ENCODE measurements at regions of chr1 and their contacts with region 1.

Region 1: GRCh38 chr1:25997828-25998761 is at the start of gene PAFAH2:
- DNase-seq: peak; percentile 85
- ATAC-seq: peak; percentile 98
- H3K4me3 Mint-ChIP-seq: peak within 1 kb of the TSS; percentile 95
- H3K27ac Mint-ChIP-seq: peak within 1 kb of the TSS; percentile 95
- H3K4me1 Mint-ChIP-seq: peaks cover 18% of the 10 kb centered on the region
- H3K27me3 Mint-ChIP-seq: no peaks in the 10 kb centered on the region
- CTCF ChIP-seq: peak; percentile 89
- total RNA-seq, gene PAFAH2: 5.4 and 9.2 TPM in 2 replicates

Region 2: GRCh38 chr1:25616095-25616986 is 381.8 kb before region 1 on chr1 and contains the start of gene MAN1C1:
- CTCF ChIA-PET with region 1: no interaction called
- POLR2A ChIA-PET with region 1: no interaction called
- intact Hi-C with region 1: loop called (anchors 5 kb)
- DNase-seq: peak; percentile 88
- ATAC-seq: peak; percentile 93
- H3K4me3 Mint-ChIP-seq: peak within 1 kb of the TSS; percentile 69
- H3K27ac Mint-ChIP-seq: no peak within 1 kb of the TSS
- H3K4me1 Mint-ChIP-seq: peaks cover 25% of the 10 kb centered on the region
- H3K27me3 Mint-ChIP-seq: peaks cover 34% of the 10 kb centered on the region
- CTCF ChIP-seq: no peak
- total RNA-seq, gene MAN1C1: 0.20 and 0.34 TPM in 2 replicates

Region 3: DNA sequence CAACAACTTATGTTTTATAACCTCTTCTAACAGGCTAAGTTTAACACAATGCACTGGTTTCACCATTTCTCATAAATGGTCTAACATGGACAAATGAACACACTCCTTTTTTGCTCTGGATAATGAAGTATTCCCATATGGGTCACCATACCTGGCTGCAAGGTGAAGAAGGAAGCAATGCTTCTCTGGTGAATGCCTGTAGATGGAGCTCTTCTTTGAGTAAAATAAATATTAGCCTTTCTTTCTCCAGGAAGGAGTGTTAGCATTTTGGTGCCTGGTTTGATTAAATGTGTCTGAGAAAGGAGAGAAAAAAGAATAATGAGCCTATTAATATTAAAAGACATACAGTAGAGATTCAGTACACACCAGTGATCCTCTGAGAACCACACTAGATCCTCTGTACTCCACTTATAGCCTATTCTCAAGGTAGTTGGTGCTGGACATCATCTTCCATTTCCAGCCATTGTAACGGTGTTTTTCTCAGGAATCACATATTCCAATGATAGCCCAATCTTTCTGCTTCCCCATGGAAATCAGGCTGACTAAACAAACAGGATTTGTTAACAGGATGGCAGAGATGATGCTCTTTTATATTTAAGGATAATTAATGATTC is 160.7 kb before region 1 on chr1:
- CTCF ChIA-PET with region 1: no interaction called
- POLR2A ChIA-PET with region 1: no interaction called
- intact Hi-C with region 1: loop called (anchors 1 kb)
- DNase-seq: no peak
- ATAC-seq: no peak
- H3K4me3 Mint-ChIP-seq: no peak overlapping the region
- H3K27ac Mint-ChIP-seq: no peak overlapping the region
- H3K4me1 Mint-ChIP-seq: no peaks in the 10 kb centered on the region
- H3K27me3 Mint-ChIP-seq: no peaks in the 10 kb centered on the region
- CTCF ChIP-seq: no peak

Region 4: DNA sequence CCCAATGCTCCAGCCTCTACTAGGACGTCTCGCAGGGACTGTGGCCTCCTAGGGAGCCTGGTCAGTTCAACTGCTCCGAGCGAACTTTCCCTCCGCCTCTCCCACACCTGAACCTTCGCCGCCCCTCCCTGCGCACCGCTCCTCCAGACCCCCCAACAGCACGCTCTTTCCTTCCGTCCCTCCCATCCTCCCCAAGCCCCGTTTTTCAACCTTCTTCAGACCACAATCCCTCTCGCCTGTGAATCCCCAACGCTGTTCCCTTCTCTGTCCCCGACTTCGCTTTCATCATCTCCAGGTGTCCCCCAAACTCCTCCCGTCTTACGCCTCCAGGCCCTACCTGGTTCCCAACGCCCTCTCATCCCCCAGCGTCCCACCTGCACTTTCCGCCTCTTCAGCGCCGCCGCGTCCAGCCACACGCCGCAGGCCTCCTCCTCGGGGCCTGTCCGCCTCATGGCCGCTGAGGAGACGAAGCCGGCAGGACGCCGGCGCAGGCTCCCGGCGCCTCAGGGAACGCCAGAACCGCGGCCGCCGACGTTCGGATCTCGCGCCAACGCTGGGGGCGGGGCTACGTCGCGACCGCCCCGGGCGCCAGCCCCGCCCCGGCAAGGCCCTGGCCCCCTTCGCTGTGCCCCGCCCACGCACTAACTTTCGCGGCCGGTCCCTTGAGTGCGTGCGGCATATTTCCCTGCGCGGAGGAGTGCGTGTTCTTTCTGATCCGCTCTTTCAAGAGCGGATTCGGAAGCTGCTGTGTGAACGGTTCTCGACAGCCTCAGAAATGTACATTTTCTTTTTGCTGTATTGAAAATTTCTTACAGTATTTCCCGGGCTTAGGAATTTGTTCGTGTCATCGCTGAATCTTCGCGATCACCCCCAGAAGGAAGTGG is 138.9 kb before region 1 on chr1 and contains the start of gene AUNIP:
- CTCF ChIA-PET with region 1: no interaction called
- POLR2A ChIA-PET with region 1: no interaction called
- intact Hi-C with region 1: loop called (anchors 1 kb)
- DNase-seq: peak; percentile 90
- ATAC-seq: peak; percentile 99
- H3K4me3 Mint-ChIP-seq: peak within 1 kb of the TSS; percentile 91
- H3K27ac Mint-ChIP-seq: peak within 1 kb of the TSS; percentile 94
- H3K4me1 Mint-ChIP-seq: peaks cover 28% of the 10 kb centered on the region
- H3K27me3 Mint-ChIP-seq: no peaks in the 10 kb centered on the region
- CTCF ChIP-seq: no peak
- total RNA-seq, gene AUNIP: 0.42 and 0.64 TPM in 2 replicates

Region 5: DNA sequence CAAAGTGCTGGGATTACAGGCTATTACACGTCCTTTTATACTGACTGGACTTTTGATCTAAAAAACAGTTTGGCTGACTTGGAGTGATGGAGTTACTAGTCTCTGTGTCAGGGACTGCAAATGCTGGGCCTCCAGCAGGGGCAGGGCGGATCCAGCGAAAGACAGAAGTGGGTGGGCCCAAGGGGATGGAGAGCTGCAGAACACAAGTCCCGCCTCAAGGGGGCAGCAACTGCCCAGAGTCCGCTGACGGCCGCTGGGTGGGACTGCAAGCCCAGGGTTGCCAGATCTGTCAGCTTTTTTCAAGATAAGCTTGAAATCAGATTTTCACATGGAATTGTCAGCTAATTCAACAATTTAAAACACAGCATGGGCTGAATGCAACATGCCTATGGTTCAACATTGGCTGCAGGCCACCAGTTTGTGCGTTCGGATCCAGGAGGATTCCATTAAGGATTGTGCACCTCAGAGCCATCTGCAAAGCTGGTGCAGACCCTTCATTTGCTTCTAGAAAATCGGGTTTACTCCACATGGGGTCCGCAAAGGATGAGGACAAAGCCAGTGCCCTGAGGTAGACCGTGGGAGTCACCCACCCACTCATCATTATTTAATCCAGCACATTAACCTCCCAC is 102.6 kb before region 1 on chr1:
- CTCF ChIA-PET with region 1: interaction called, 94 read pairs
- POLR2A ChIA-PET with region 1: interaction called, 22 read pairs
- intact Hi-C with region 1: loop called (anchors 1 kb)
- DNase-seq: peak; percentile 80
- ATAC-seq: peak; percentile 100
- H3K4me3 Mint-ChIP-seq: peak overlapping the region; percentile 3
- H3K27ac Mint-ChIP-seq: peak overlapping the region; percentile 22
- H3K4me1 Mint-ChIP-seq: peaks cover 7% of the 10 kb centered on the region
- H3K27me3 Mint-ChIP-seq: no peaks in the 10 kb centered on the region
- CTCF ChIP-seq: peak; percentile 74

Region 6: DNA sequence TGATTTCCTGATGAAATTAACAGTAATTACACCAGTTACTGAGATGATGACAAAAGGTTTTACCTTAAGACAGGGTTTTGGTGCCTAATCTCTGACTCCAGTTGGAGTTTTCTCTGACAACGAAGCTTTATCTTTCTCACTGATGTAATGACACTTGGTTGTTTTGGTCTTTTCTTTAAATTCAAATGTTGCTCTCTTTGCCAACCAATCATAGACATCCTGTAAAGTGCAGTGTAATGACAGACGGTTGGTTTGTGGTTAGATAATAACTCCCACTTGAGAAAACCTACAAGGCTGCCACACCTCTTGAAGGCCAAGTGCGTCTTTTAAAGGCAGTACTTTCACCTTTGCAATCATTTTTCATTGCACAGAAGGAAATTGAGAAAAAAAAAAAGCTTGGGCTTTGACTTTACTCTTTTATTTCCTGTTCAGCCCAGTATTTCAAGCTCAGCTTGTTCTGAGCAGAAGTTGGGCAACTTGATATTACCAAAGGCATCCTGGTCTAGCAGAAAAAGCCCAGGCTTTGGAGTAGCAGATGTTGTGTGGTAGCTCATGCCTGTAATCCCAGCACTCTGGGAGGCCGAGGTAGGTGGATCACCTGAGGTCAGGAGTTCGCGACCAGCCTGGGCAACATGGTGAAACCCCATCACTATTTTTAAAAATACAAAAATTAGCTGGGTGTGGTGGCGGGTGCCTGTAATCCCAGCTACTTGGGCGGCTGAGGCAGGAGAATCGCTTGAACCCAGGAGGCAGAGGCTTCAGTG is 128.4 kb after region 1 on chr1:
- CTCF ChIA-PET with region 1: no interaction called
- POLR2A ChIA-PET with region 1: no interaction called
- intact Hi-C with region 1: no loop called
- DNase-seq: no peak
- ATAC-seq: peak; percentile 75
- H3K4me3 Mint-ChIP-seq: no peak overlapping the region
- H3K27ac Mint-ChIP-seq: peak overlapping the region; percentile 30
- H3K4me1 Mint-ChIP-seq: peaks cover 18% of the 10 kb centered on the region
- H3K27me3 Mint-ChIP-seq: peaks cover 6% of the 10 kb centered on the region
- CTCF ChIP-seq: no peak